ENCODE measurements at regions of chr9 and their contacts with region 1.

Region 1: DNA sequence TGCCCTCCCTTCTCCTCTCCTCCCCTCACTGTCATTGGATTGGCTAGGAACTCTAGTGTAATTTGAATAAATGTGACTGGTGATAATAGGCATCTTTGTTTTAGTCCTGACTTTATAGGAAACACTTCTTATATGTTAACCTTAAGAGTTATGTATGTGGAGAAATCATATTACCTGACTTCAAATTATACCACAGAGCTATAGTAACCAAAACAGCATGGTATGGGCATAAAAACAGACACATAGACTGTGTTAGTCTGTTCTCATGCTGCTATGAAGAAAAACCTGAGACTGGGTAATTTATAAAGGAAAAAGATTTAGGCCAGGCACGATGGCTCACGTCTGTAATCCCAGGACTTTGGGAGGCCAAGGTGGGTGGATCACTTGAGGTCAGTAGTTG is 9.4 kb downstream of the MRRF start:
- DNase-seq: no peak
- ATAC-seq: no peak
- H3K4me3 ChIP-seq: no peak overlapping the region
- H3K27ac ChIP-seq: no peak overlapping the region
- H3K4me1 ChIP-seq: no peaks in the 10 kb centered on the region
- H3K27me3 ChIP-seq: no peaks in the 10 kb centered on the region
- CTCF ChIP-seq: no peak
- POLR2A ChIP-seq: no peak
- RAD21 ChIP-seq: no peak

Region 2: GRCh38 chr9:122228568-122229484 is 45.2 kb before region 1 on chr9 and contains the start of gene LHX6:
- CTCF ChIA-PET with region 1: no interaction called
- POLR2A ChIA-PET with region 1: no interaction called
- RAD21 ChIA-PET with region 1: no interaction called
- intact Hi-C with region 1: no loop called
- DNase-seq: no peak
- ATAC-seq: peak; percentile 69
- H3K4me3 ChIP-seq: peak within 1 kb of the TSS; percentile 33 to 58
- H3K27ac ChIP-seq: no peak within 1 kb of the TSS; the same call in 1 of the 2 replicates
- H3K4me1 ChIP-seq: peaks cover 0 to 6% of the 10 kb centered on the region in 2 experiments; a peak in 1 of 4 replicates
- H3K27me3 ChIP-seq: peaks cover 13% of the 10 kb centered on the region; the same call in 1 of the 2 replicates
- CTCF ChIP-seq: no peak
- POLR2A ChIP-seq: no peak
- RAD21 ChIP-seq: no peak
- total RNA-seq, gene LHX6: 4.1 TPM

Region 3: GRCh38 chr9:122307925-122308324 is 33.9 kb after region 1 on chr9:
- CTCF ChIA-PET with region 1: no interaction called
- POLR2A ChIA-PET with region 1: no interaction called
- RAD21 ChIA-PET with region 1: no interaction called
- intact Hi-C with region 1: loop called (anchors 1 kb)
- DNase-seq: no peak
- ATAC-seq: no peak
- H3K4me3 ChIP-seq: no peak overlapping the region
- H3K27ac ChIP-seq: no peak overlapping the region
- H3K4me1 ChIP-seq: no peaks in the 10 kb centered on the region
- H3K27me3 ChIP-seq: no peaks in the 10 kb centered on the region
- CTCF ChIP-seq: no peak
- POLR2A ChIP-seq: no peak
- RAD21 ChIP-seq: no peak

Measured in HCT116 (cell line).